Pancreas (tissue), 10 donors: ENCODE measurements at regions of chr6 and their contacts with region 1.

Region 1: GRCh38 chr6:114747987-114748630 is 405.3 kb upstream of the HS3ST5 start:
- DNase-seq: peak in 5 of 6 donors; percentile 11 to 58 (median 44)
- ATAC-seq: peak in 3 of 4 donors; percentile 36 to 53 (median 37)
- H3K4me3 ChIP-seq: no peak overlapping the region
- H3K27ac ChIP-seq: no peak overlapping the region
- H3K4me1 ChIP-seq: no peaks in the 10 kb centered on the region
- H3K27me3 ChIP-seq: no peaks in the 10 kb centered on the region
- CTCF ChIP-seq: peak; percentile 25 to 64 (median 44)

Region 2: GRCh38 chr6:113281014-113281413 is 1467.1 kb before region 1 on chr6:
- intact Hi-C with region 1: no loop called
- DNase-seq: no peak
- ATAC-seq: no peak
- H3K4me3 ChIP-seq: no peak overlapping the region
- H3K27ac ChIP-seq: no peak overlapping the region
- H3K4me1 ChIP-seq: no peaks in the 10 kb centered on the region
- H3K27me3 ChIP-seq: peaks cover 0 to 5% (median 0%) of the 10 kb centered on the region in 4 donors
- CTCF ChIP-seq: no peak

Region 3: GRCh38 chr6:113690281-113691259 is 1057.5 kb before region 1 on chr6:
- intact Hi-C with region 1: no loop called
- DNase-seq: peak in 1 of 6 donors; percentile 45
- ATAC-seq: peak; percentile 53 to 79 (median 59)
- H3K4me3 ChIP-seq: no peak overlapping the region
- H3K27ac ChIP-seq: peak overlapping the region in 2 of 4 donors; percentile 10 to 48
- H3K4me1 ChIP-seq: peaks cover 11 to 38% (median 28%) of the 10 kb centered on the region in 3 donors
- H3K27me3 ChIP-seq: no peaks in the 10 kb centered on the region
- CTCF ChIP-seq: no peak

Region 4: GRCh38 chr6:115896538-115897129 is 1148.5 kb after region 1 on chr6:
- intact Hi-C with region 1: loop called (anchors 5 to 10 kb)
- DNase-seq: no peak
- ATAC-seq: peak in 3 of 4 donors; percentile 70 to 76 (median 72)
- H3K4me3 ChIP-seq: no peak overlapping the region
- H3K27ac ChIP-seq: no peak overlapping the region
- H3K4me1 ChIP-seq: peaks cover 0 to 3% (median 0%) of the 10 kb centered on the region in 3 donors
- H3K27me3 ChIP-seq: no peaks in the 10 kb centered on the region
- CTCF ChIP-seq: peak; percentile 20 to 61 (median 56)

Region 5: DNA sequence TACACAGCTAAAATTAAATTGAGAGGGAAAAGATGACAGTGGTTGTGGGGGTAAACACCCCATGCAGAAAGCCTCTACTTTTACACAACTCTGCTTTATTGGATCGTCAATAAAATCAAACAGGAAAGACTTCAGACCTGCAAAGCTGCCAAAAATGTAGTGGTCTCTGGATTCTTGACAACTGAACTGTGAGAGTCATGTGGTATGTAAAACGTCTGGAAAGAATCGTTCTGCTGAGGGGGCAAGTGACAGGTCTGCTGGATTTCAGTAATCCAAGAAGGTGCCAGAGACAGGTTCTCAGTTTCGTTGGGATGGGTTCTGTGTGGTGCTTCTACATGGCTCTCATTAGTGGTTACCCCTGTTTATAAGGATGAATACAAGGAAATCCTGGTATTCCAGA is 1442.4 kb after region 1 on chr6:
- intact Hi-C with region 1: no loop called
- DNase-seq: no peak
- ATAC-seq: no peak
- H3K4me3 ChIP-seq: no peak overlapping the region
- H3K27ac ChIP-seq: no peak overlapping the region
- H3K4me1 ChIP-seq: peaks cover 0 to 5% (median 0%) of the 10 kb centered on the region in 3 donors
- H3K27me3 ChIP-seq: no peaks in the 10 kb centered on the region
- CTCF ChIP-seq: no peak